CD4-positive, alpha-beta memory T cell (primary cell): ENCODE measurements at regions of chr3 and their contacts with region 1.

Region 1: GRCh38 chr3:41961750-41962679 is at the start of gene ULK4:
- DNase-seq: peak; percentile 95 to 97 (median 96)
- H3K4me3 ChIP-seq: peak within 1 kb of the TSS; percentile 59 to 93
- H3K4me3 Mint-ChIP-seq: peak within 1 kb of the TSS; percentile 99 to 100 (median 99)
- H3K27ac ChIP-seq: peak within 1 kb of the TSS; percentile 82
- H3K27ac Mint-ChIP-seq: peak within 1 kb of the TSS; percentile 97 to 99 (median 99)
- H3K4me1 ChIP-seq: peaks cover 15% of the 10 kb centered on the region
- H3K4me1 Mint-ChIP-seq: peaks cover 14 to 28% (median 21%) of the 10 kb centered on the region in 4 donors
- H3K27me3 ChIP-seq: no peaks in the 10 kb centered on the region
- H3K27me3 Mint-ChIP-seq: no peaks in the 10 kb centered on the region
- total RNA-seq, gene ULK4: 27.4 to 29.1 TPM

Region 2: GRCh38 chr3:40452876-40453730 is 1508.9 kb before region 1 on chr3:
- CTCF ChIA-PET with region 1: no interaction called
- POLR2A ChIA-PET with region 1: interaction called, 10 read pairs
- intact Hi-C with region 1: loop called (anchors 1 kb)
- DNase-seq: peak; percentile 92 to 99 (median 96)
- H3K4me3 ChIP-seq: peak overlapping the region; percentile 80 to 81
- H3K4me3 Mint-ChIP-seq: peak overlapping the region; percentile 88 to 98 (median 94)
- H3K27ac ChIP-seq: peak overlapping the region; percentile 93
- H3K27ac Mint-ChIP-seq: peak overlapping the region; percentile 93 to 100 (median 99)
- H3K4me1 ChIP-seq: peaks cover 30% of the 10 kb centered on the region
- H3K4me1 Mint-ChIP-seq: peaks cover 23 to 47% (median 35%) of the 10 kb centered on the region in 4 donors
- H3K27me3 ChIP-seq: no peaks in the 10 kb centered on the region
- H3K27me3 Mint-ChIP-seq: no peaks in the 10 kb centered on the region

Region 3: DNA sequence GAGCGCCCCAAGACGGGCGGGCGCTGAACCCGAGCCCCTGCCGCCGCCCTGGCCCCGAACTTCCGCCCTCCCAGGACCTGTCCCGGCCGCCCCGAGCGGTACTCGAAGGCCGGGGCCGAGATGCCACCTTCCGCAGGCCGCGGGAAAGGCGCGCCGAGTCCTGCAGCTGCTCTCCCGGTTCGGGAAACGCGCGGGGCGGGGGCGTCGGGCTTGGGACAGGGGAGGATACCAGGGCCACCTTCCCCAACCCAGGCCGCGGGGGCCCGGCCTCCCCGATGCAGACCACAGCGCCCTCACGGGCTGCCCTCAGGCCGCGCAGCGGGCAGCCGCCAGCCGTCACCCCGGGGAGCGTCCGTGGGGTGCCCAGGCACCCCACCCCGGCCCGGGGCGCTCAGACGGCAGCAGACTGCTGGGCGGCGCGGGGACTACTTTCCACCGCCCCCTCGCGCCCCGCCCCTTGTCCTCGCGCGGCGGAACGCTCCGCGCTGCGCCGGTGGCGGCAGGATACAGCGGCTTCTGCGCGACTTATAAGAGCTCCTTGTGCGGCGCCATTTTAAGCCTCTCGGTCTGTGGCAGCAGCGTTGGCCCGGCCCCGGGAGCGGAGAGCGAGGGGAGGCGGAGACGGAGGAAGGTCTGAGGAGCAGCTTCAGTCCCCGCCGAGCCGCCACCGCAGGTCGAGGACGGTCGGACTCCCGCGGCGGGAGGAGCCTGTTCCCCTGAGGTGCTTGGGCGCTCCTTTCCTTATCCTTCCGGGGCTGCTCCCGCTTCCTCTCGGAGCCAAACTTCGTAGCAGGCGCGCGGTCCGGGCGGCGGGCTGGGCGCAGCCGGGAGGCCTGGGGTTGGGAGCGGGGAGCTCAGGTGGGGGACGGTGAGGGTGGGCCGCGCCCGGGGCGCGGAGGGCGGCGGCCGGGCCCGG is 762.8 kb before region 1 on chr3 and contains the start of gene CTNNB1:
- CTCF ChIA-PET with region 1: no interaction called
- POLR2A ChIA-PET with region 1: interaction called, 6 read pairs
- intact Hi-C with region 1: loop called (anchors 1 kb)
- DNase-seq: peak; percentile 90 to 92 (median 91)
- H3K4me3 ChIP-seq: peak within 1 kb of the TSS; percentile 83 to 89
- H3K4me3 Mint-ChIP-seq: peak within 1 kb of the TSS; percentile 94 to 99 (median 96)
- H3K27ac ChIP-seq: peak within 1 kb of the TSS; percentile 96
- H3K27ac Mint-ChIP-seq: peak within 1 kb of the TSS; percentile 91 to 98 (median 95)
- H3K4me1 ChIP-seq: peaks cover 41% of the 10 kb centered on the region
- H3K4me1 Mint-ChIP-seq: peaks cover 28 to 43% (median 35%) of the 10 kb centered on the region in 4 donors
- H3K27me3 ChIP-seq: no peaks in the 10 kb centered on the region
- H3K27me3 Mint-ChIP-seq: peaks cover under 1 to 1% of the 10 kb centered on the region in 2 donors
- total RNA-seq, gene CTNNB1: 175 to 176 TPM

Region 4: DNA sequence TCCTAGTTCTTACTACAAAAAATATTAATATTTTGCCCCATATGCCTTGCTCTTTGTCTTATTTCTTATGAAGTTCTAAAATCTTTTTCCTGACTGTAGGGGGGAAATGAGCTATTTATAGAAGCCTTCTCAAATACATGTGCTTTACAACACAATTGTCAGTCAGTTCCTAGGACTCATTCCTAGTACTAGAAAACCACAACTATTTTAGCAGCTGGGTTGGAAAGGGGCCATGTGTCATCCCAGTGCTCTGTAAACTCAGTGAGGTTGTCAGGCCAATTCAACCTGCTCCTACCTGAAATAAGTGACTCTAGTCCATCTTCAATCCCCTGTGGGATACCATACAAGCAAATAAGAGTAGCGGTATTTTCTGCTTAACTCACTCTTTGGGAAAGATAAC is 153.9 kb before region 1 on chr3:
- CTCF ChIA-PET with region 1: no interaction called
- POLR2A ChIA-PET with region 1: no interaction called
- intact Hi-C with region 1: no loop called
- DNase-seq: no peak
- H3K4me3 ChIP-seq: no peak overlapping the region
- H3K4me3 Mint-ChIP-seq: no peak overlapping the region
- H3K27ac ChIP-seq: no peak overlapping the region
- H3K27ac Mint-ChIP-seq: no peak overlapping the region
- H3K4me1 ChIP-seq: no peaks in the 10 kb centered on the region
- H3K4me1 Mint-ChIP-seq: no peaks in the 10 kb centered on the region
- H3K27me3 ChIP-seq: no peaks in the 10 kb centered on the region
- H3K27me3 Mint-ChIP-seq: no peaks in the 10 kb centered on the region

Region 5: GRCh38 chr3:42080452-42080891 is 118.5 kb after region 1 on chr3:
- CTCF ChIA-PET with region 1: no interaction called
- POLR2A ChIA-PET with region 1: interaction called, 4 read pairs
- intact Hi-C with region 1: loop called (anchors 5 kb)
- DNase-seq: peak in 4 of 5 donors; percentile 13 to 64 (median 30)
- H3K4me3 ChIP-seq: no peak overlapping the region
- H3K4me3 Mint-ChIP-seq: peak overlapping the region in 5 of 8 donors; percentile 47 to 83 (median 62)
- H3K27ac ChIP-seq: peak overlapping the region; percentile 53
- H3K27ac Mint-ChIP-seq: peak overlapping the region; percentile 62 to 95 (median 91)
- H3K4me1 ChIP-seq: peaks cover 48% of the 10 kb centered on the region
- H3K4me1 Mint-ChIP-seq: peaks cover 42 to 68% (median 52%) of the 10 kb centered on the region in 4 donors
- H3K27me3 ChIP-seq: no peaks in the 10 kb centered on the region
- H3K27me3 Mint-ChIP-seq: no peaks in the 10 kb centered on the region

Region 6: DNA sequence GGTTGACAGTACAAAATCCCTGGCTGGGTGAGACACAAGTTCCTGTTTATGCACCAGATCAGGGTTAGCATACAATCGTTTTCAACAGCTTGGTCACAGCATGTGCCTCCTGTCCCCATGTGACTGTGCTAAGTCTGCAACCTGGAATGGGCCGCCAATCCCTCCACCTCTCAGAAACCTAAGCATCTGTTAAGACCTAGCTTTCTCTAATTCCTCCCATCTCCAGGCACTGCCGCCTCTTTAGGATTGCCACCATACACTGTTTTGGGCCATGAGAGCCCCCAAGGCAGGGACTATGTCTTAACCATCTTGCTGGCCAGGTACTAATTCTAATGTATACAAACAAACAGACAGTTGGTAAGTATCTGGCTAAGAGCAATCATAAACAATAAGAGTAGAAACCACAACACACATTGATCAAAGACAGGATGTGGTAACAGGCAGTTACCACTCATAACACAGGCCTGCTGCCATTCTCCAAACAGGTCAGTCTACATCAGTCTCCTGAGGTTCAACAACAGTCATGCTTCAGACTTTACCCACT is 594.1 kb after region 1 on chr3:
- CTCF ChIA-PET with region 1: no interaction called
- POLR2A ChIA-PET with region 1: no interaction called
- intact Hi-C with region 1: loop called (anchors 5 kb)
- DNase-seq: peak; percentile 78 to 86 (median 81)
- H3K4me3 ChIP-seq: peak overlapping the region; percentile 15 to 17
- H3K4me3 Mint-ChIP-seq: peak overlapping the region; percentile 46 to 88 (median 80)
- H3K27ac ChIP-seq: peak overlapping the region; percentile 41
- H3K27ac Mint-ChIP-seq: peak overlapping the region; percentile 91 to 99 (median 98)
- H3K4me1 ChIP-seq: peaks cover 44% of the 10 kb centered on the region
- H3K4me1 Mint-ChIP-seq: peaks cover 31 to 52% (median 43%) of the 10 kb centered on the region in 4 donors
- H3K27me3 ChIP-seq: no peaks in the 10 kb centered on the region
- H3K27me3 Mint-ChIP-seq: no peaks in the 10 kb centered on the region

Region 7: GRCh38 chr3:43105596-43106292 is 1143.7 kb after region 1 on chr3 and contains the start of gene POMGNT2:
- CTCF ChIA-PET with region 1: no interaction called
- POLR2A ChIA-PET with region 1: no interaction called
- intact Hi-C with region 1: loop called (anchors 10 kb)
- DNase-seq: peak; percentile 82 to 88 (median 87)
- H3K4me3 ChIP-seq: peak within 1 kb of the TSS; percentile 12 to 61
- H3K4me3 Mint-ChIP-seq: peak within 1 kb of the TSS; percentile 82 to 88 (median 84)
- H3K27ac ChIP-seq: peak within 1 kb of the TSS; percentile 58
- H3K27ac Mint-ChIP-seq: peak within 1 kb of the TSS; percentile 24 to 75 (median 65)
- H3K4me1 ChIP-seq: peaks cover 21% of the 10 kb centered on the region
- H3K4me1 Mint-ChIP-seq: peaks cover 11 to 22% (median 14%) of the 10 kb centered on the region in 4 donors
- H3K27me3 ChIP-seq: no peaks in the 10 kb centered on the region
- H3K27me3 Mint-ChIP-seq: peaks cover 0 to 2% of the 10 kb centered on the region in 2 donors
- total RNA-seq, gene POMGNT2: 5.4 TPM